ENCODE measurements at regions of chr2 and their contacts with region 1.

Region 1: DNA sequence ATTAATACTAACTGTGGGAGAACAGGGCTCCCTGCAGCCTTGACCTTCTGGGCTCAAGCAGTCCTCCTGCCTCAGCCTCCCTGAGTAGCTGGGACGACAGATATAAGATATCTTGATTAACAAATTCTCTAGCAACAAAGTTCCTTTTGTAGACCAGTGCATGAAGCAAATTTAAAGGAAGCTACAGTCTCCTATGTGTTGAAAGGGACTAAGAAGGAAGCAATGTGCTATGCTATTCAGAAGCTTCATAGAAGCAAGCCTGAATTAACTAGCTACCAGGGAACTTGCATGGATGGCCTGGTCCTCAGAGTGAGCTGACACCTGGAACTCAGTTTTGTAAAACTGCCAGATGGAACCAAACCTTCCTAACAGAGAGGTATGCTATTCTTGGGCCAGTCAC is 33.2 kb downstream of the RAPH1 start:
- DNase-seq: no peak
- ATAC-seq: no peak
- H3K4me3 ChIP-seq: no peak overlapping the region
- H3K27ac ChIP-seq: no peak overlapping the region
- H3K4me1 ChIP-seq: peaks cover 6% of the 10 kb centered on the region; the same call in 1 of the 2 replicates
- H3K27me3 ChIP-seq: no peaks in the 10 kb centered on the region
- CTCF ChIP-seq: no peak

Region 2: GRCh38 chr2:203751685-203752271 is 249.9 kb after region 1 on chr2:
- CTCF ChIA-PET with region 1: no interaction called
- POLR2A ChIA-PET with region 1: interaction called, 12 read pairs
- in situ Hi-C with region 1: no loop called
- intact Hi-C with region 1: no loop called
- DNase-seq: no peak
- ATAC-seq: no peak
- H3K4me3 ChIP-seq: no peak overlapping the region
- H3K27ac ChIP-seq: no peak overlapping the region
- H3K4me1 ChIP-seq: no peaks in the 10 kb centered on the region
- H3K27me3 ChIP-seq: no peaks in the 10 kb centered on the region
- CTCF ChIP-seq: no peak

Measured in Panc1 (cell line).